Heart right ventricle (tissue), 16 donors: ENCODE measurements at regions of chr6 and their contacts with region 1.

Region 1: GRCh38 chr6:89432875-89433251 is at the start of gene ANKRD6:
- DNase-seq: peak; percentile 64 to 83
- ATAC-seq: peak; percentile 94 to 98 (median 96)
- H3K4me3 ChIP-seq: peak within 1 kb of the TSS; percentile 65 to 99 (median 94)
- H3K27ac ChIP-seq: peak within 1 kb of the TSS in 7 of 10 donors; percentile 33 to 75 (median 57)
- H3K4me1 ChIP-seq: peaks cover 3 to 35% (median 7%) of the 10 kb centered on the region in 9 donors
- H3K27me3 ChIP-seq: peaks cover 0 to 4% (median 0%) of the 10 kb centered on the region in 7 donors
- CTCF ChIP-seq: peak; percentile 76 to 98 (median 88)
- total RNA-seq, gene ANKRD6: 6.3 to 18.2 (median 10.4) TPM

Region 2: DNA sequence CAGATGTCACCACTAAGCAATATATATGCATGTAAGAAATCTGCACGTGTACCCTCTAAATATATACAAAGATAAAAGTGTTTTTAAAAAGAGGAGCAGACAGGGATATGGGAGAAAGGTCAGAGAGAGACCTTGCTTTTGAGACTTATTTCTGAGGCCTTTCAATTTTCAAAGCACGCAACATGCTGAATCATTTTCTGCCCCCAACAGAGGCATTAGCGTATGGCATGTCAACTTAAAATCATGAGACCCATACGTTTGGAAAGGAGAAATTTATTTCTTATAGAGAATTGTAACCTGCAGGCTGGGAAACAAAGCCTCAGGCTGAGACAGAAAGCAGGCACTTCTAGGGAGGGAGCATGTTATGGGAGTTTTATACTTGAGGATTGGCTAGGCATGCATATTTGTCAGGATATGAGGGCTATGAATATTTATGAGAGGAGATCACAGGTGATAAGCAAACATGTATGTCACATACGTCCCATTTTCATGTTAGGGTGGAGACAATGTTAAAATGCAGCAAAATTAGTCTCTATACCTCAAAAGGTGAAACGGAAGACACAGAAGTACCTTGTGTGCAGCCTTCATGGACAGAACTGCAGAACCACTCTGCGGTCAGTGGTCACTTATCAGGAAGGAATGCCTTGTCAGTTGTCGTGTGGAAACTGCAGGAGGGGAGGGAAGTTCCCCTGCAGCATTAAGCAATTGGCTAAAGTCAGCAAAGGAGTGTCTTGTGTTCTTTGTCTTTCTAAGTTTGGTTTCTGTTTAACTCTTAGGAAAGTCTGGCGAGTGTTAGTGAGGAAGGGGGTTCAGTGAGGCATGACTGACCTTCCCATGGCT is 111.5 kb before region 1 on chr6:
- intact Hi-C with region 1: no loop called
- DNase-seq: no peak
- ATAC-seq: peak in 4 of 8 donors; percentile 35 to 84 (median 58)
- H3K4me3 ChIP-seq: peak overlapping the region in 1 of 10 donors; percentile 3
- H3K27ac ChIP-seq: no peak overlapping the region
- H3K4me1 ChIP-seq: peaks cover 0 to 48% (median 17%) of the 10 kb centered on the region in 9 donors
- H3K27me3 ChIP-seq: no peaks in the 10 kb centered on the region
- CTCF ChIP-seq: no peak

Region 3: DNA sequence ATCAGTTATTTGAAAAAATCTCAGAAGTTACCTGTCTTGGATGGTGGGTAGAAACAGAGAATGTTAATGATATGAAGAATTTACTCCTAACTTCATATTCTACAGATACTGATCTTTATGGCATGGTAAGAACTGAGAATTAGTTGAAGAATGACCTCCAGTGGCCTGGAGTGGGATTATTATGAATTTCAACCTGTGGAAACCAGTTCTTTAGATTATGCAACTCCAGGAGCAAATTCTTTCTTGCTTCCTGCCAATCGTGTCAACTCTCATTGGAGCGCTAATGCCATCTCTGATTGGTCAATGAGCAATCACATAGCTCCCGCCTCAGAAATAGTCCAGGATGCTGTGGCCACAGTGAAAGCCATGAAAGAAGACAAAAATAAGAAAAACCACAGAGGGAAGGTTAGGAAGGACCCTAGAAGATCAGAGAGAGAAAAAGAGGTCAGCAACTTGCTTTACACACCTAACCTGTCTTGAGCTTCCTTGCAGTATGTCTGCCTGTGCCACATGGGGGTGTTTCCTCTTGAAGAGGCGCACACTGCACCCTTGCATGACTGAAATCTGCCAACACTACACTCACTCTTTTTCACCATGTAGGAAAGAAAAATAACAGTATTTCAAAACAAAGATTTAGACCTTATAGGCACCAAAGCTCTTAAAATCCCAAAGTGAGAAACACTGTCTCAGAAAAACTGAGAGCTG is 165.3 kb after region 1 on chr6:
- intact Hi-C with region 1: loop called in 1 of 10 experiments (anchors 5 kb)
- DNase-seq: no peak
- ATAC-seq: peak in 2 of 8 donors; percentile 22 to 48
- H3K4me3 ChIP-seq: no peak overlapping the region
- H3K27ac ChIP-seq: no peak overlapping the region
- H3K4me1 ChIP-seq: peaks cover 0 to 23% (median 3%) of the 10 kb centered on the region in 9 donors
- H3K27me3 ChIP-seq: no peaks in the 10 kb centered on the region
- CTCF ChIP-seq: peak in 5 of 9 donors; percentile 11 to 47 (median 37)

Region 4: DNA sequence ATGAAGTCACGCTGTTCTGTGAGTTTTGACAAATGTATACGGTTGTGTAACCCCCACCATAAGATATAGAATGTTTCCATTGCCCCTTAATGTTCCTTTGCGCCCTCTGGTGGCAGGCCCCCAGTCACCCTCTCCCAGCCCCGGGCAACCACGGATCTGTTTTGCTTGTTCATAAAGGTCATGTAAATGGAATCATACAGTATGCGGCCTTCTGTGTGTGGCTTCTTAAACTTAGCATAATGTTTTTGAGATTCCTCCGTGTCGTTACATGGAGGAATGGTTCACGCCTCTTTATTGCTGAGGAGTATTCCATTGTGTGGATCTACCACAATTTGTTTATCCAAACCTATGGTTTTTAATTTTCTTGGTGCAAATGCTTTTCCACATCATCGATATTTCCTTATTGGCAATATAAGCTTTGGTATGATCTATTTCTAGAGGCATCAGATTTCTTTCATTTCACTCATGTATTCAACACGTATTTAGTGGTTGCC is 177.3 kb after region 1 on chr6:
- intact Hi-C with region 1: loop called (anchors 1 to 5 kb)
- DNase-seq: peak; percentile 67 to 74
- ATAC-seq: peak in 7 of 8 donors; percentile 59 to 84 (median 77)
- H3K4me3 ChIP-seq: no peak overlapping the region
- H3K27ac ChIP-seq: no peak overlapping the region
- H3K4me1 ChIP-seq: no peaks in the 10 kb centered on the region
- H3K27me3 ChIP-seq: no peaks in the 10 kb centered on the region
- CTCF ChIP-seq: peak; percentile 61 to 91 (median 87)